ENCODE measurements at regions of chr4 and their contacts with region 1.

Region 1: GRCh38 chr4:20773144-20773997 is 73.1 kb downstream of the PACRGL start:
- DNase-seq: no peak
- ATAC-seq: peak; percentile 45 to 66
- H3K4me3 ChIP-seq: no peak overlapping the region
- H3K27ac ChIP-seq: no peak overlapping the region
- H3K4me1 ChIP-seq: no peaks in the 10 kb centered on the region
- H3K27me3 ChIP-seq: no peaks in the 10 kb centered on the region

Region 2: GRCh38 chr4:20700007-20700761 is 73.2 kb before region 1 on chr4 and contains the start of gene PACRGL:
- intact Hi-C with region 1: no loop called
- DNase-seq: peak; percentile 98 to 99 (median 98)
- ATAC-seq: peak; percentile 100
- H3K4me3 ChIP-seq: peak within 1 kb of the TSS; percentile 97
- H3K27ac ChIP-seq: peak within 1 kb of the TSS; percentile 78
- H3K4me1 ChIP-seq: peaks cover 3% of the 10 kb centered on the region
- H3K27me3 ChIP-seq: no peaks in the 10 kb centered on the region
- total RNA-seq, gene PACRGL: 11.5 to 12.6 (median 11.8) TPM

Region 3: GRCh38 chr4:21134994-21135393 is 361.6 kb after region 1 on chr4:
- intact Hi-C with region 1: loop called in 1 of 4 experiments (anchors 10 kb)
- DNase-seq: no peak
- ATAC-seq: no peak
- H3K4me3 ChIP-seq: no peak overlapping the region
- H3K27ac ChIP-seq: no peak overlapping the region
- H3K4me1 ChIP-seq: no peaks in the 10 kb centered on the region
- H3K27me3 ChIP-seq: no peaks in the 10 kb centered on the region

Measured in right cardiac atrium (tissue), 5 donors.